CD4-positive, alpha-beta T cell (primary cell): ENCODE measurements at regions of chr10 and their contacts with region 1.

Region 1: GRCh38 chr10:87850742-87851205 is 12.6 kb downstream of the KLLN start:
- DNase-seq: peak; percentile 18 to 81 (median 39)
- ATAC-seq: peak; percentile 95
- H3K4me3 ChIP-seq: no peak overlapping the region
- H3K4me3 Mint-ChIP-seq: no peak overlapping the region
- H3K27ac ChIP-seq: no peak overlapping the region
- H3K27ac Mint-ChIP-seq: no peak overlapping the region
- H3K4me1 ChIP-seq: peaks cover 3% of the 10 kb centered on the region
- H3K4me1 Mint-ChIP-seq: peaks cover 17% of the 10 kb centered on the region
- H3K27me3 ChIP-seq: no peaks in the 10 kb centered on the region
- H3K27me3 Mint-ChIP-seq: no peaks in the 10 kb centered on the region
- CTCF ChIP-seq: peak; percentile 71

Region 2: DNA sequence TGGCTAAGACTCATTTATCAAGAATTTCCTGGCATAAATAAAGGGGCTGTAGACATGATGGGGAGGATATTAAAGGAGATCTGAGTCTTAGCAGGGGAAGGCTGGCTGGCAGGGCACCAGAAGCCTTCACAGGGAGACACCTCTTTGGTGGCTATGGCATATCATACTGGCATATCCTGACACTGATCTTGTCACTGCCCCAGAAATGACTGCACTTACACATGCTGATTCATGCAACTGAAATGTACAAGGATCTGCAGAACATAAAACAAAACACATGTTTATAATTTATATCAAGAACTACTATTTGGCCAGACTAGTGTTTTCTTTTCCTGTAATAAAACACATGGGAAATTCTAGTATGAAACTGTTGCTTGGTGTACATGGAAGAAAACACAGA is 903.5 kb after region 1 on chr10:
- CTCF ChIA-PET with region 1: no interaction called
- POLR2A ChIA-PET with region 1: no interaction called
- intact Hi-C with region 1: no loop called
- DNase-seq: no peak
- ATAC-seq: no peak
- H3K4me3 ChIP-seq: no peak overlapping the region
- H3K4me3 Mint-ChIP-seq: no peak overlapping the region
- H3K27ac ChIP-seq: no peak overlapping the region
- H3K27ac Mint-ChIP-seq: no peak overlapping the region
- H3K4me1 ChIP-seq: no peaks in the 10 kb centered on the region
- H3K4me1 Mint-ChIP-seq: no peaks in the 10 kb centered on the region
- H3K27me3 ChIP-seq: no peaks in the 10 kb centered on the region
- H3K27me3 Mint-ChIP-seq: no peaks in the 10 kb centered on the region
- CTCF ChIP-seq: no peak

Region 3: GRCh38 chr10:88810196-88810961 is 959.6 kb after region 1 on chr10:
- CTCF ChIA-PET with region 1: no interaction called
- POLR2A ChIA-PET with region 1: no interaction called
- intact Hi-C with region 1: loop called in 1 of 2 experiments (anchors 10 kb)
- DNase-seq: peak in 9 of 14 experiments; percentile 9 to 76 (median 21)
- ATAC-seq: peak; percentile 82
- H3K4me3 ChIP-seq: no peak overlapping the region
- H3K4me3 Mint-ChIP-seq: no peak overlapping the region
- H3K27ac ChIP-seq: no peak overlapping the region
- H3K27ac Mint-ChIP-seq: no peak overlapping the region
- H3K4me1 ChIP-seq: peaks cover 3% of the 10 kb centered on the region
- H3K4me1 Mint-ChIP-seq: peaks cover 15% of the 10 kb centered on the region
- H3K27me3 ChIP-seq: no peaks in the 10 kb centered on the region
- H3K27me3 Mint-ChIP-seq: no peaks in the 10 kb centered on the region
- CTCF ChIP-seq: peak; percentile 86